GM12878 (cell line): ENCODE measurements at regions of chr11 and their contacts with region 1.

Region 1: DNA sequence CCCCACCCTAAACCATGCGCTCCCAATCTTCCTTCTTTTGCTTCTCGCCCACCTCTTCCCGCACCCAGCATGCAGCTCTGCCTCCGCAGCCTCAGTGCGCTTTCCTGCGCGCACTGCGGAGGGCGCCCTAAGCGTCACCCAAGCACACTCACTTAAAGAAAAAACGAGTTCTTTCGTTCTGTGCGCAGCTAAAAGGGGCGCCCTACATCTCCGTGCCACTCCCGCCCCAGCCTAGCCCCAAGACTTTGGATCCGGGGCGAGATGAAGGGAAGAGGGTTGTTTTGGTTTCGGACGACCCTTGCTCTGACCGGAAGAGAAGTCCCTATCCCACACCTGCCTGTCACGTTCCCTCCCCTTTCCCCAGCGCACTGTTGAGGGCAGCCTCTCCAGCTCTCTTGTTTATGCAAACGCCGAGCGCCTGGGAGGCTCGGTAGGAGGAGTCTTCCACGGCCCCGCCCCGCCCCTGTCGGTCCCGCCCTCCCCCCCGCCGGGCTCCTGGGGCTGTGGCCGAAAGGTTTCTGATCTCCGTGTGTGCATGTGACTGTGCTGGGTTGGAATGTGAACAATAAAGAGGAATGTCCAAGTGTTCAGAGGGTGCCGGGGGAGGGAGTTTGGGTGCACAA is 5.3 kb downstream of the VSIG2 start:
- DNase-seq: peak; percentile 53
- ATAC-seq: peak; percentile 94
- H3K4me3 ChIP-seq: peak overlapping the region; percentile 88
- H3K27ac ChIP-seq: peak overlapping the region; percentile 53; the same call in 1 of the 2 replicates
- H3K4me1 ChIP-seq: peaks cover 4% of the 10 kb centered on the region; the same call in 1 of the 2 replicates
- H3K27me3 ChIP-seq: no peaks in the 10 kb centered on the region
- CTCF ChIP-seq: peak; percentile 66 to 79 (median 78)
- EP300 ChIP-seq: no peak
- POLR2A ChIP-seq: peak; percentile 70
- RAD21 ChIP-seq: peak; percentile 47

Region 2: DNA sequence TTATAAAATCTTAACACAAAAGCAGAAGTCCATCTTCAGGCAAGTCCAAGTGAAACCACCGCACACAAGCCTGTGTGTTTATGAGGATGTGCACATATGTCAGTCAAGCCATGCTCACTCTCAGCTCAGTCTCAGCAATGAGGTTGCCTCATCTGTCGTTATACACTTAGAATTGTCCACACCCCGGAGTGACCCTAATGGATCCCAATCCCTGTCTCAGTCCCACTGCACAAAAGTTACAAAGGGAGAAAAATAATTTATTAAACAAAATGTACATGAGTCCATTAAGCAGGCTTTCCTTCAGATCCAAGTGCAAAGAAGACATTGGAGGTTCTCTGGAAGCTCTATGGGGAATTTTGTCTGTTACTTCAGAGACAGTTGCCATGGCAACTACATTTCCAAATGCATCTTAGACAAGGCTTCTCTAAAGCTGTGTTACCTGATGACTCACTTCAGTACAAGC is 227.7 kb before region 1 on chr11:
- CTCF ChIA-PET with region 1: no interaction called
- POLR2A ChIA-PET with region 1: no interaction called
- RAD21 ChIA-PET with region 1: no interaction called
- SMC1A ChIA-PET with region 1: no interaction called
- in situ Hi-C with region 1: no loop called
- intact Hi-C with region 1: no loop called
- DNase-seq: no peak
- ATAC-seq: no peak
- H3K4me3 ChIP-seq: no peak overlapping the region
- H3K27ac ChIP-seq: no peak overlapping the region
- H3K4me1 ChIP-seq: no peaks in the 10 kb centered on the region
- H3K27me3 ChIP-seq: peaks cover 0 to 6% of the 10 kb centered on the region in 2 experiments; a peak in 1 of 4 replicates
- CTCF ChIP-seq: no peak
- EP300 ChIP-seq: no peak
- POLR2A ChIP-seq: no peak
- RAD21 ChIP-seq: no peak

Region 3: GRCh38 chr11:124724979-124725718 is 21.6 kb before region 1 on chr11:
- CTCF ChIA-PET with region 1: interaction called, 36 read pairs
- POLR2A ChIA-PET with region 1: interaction called, 5 read pairs
- RAD21 ChIA-PET with region 1: interaction called, 7 read pairs
- SMC1A ChIA-PET with region 1: interaction called, 8 read pairs
- in situ Hi-C with region 1: no loop called
- intact Hi-C with region 1: no loop called
- DNase-seq: peak; percentile 41
- ATAC-seq: peak; percentile 95
- H3K4me3 ChIP-seq: no peak overlapping the region
- H3K27ac ChIP-seq: no peak overlapping the region
- H3K4me1 ChIP-seq: peaks cover 7% of the 10 kb centered on the region
- H3K27me3 ChIP-seq: no peaks in the 10 kb centered on the region; a peak in 2 of 4 replicates
- CTCF ChIP-seq: no peak
- EP300 ChIP-seq: no peak
- POLR2A ChIP-seq: no peak
- RAD21 ChIP-seq: no peak

Region 4: GRCh38 chr11:124732230-124732629 is 14.5 kb before region 1 on chr11:
- CTCF ChIA-PET with region 1: interaction called, 13 read pairs
- POLR2A ChIA-PET with region 1: no interaction called
- RAD21 ChIA-PET with region 1: no interaction called
- SMC1A ChIA-PET with region 1: interaction called, 3 read pairs
- in situ Hi-C with region 1: no loop called
- intact Hi-C with region 1: no loop called
- DNase-seq: no peak
- ATAC-seq: no peak
- H3K4me3 ChIP-seq: no peak overlapping the region
- H3K27ac ChIP-seq: no peak overlapping the region
- H3K4me1 ChIP-seq: no peaks in the 10 kb centered on the region
- H3K27me3 ChIP-seq: peaks cover 0 to 3% of the 10 kb centered on the region in 2 experiments; a peak in 1 of 4 replicates
- CTCF ChIP-seq: no peak
- EP300 ChIP-seq: no peak
- POLR2A ChIP-seq: no peak
- RAD21 ChIP-seq: no peak

Region 5: GRCh38 chr11:125001079-125001778 is 254.5 kb after region 1 on chr11:
- CTCF ChIA-PET with region 1: no interaction called
- POLR2A ChIA-PET with region 1: no interaction called
- RAD21 ChIA-PET with region 1: no interaction called
- SMC1A ChIA-PET with region 1: no interaction called
- in situ Hi-C with region 1: no loop called
- intact Hi-C with region 1: no loop called
- DNase-seq: peak; percentile 5
- ATAC-seq: no peak; the same call in 2 of the 3 replicates
- H3K4me3 ChIP-seq: no peak overlapping the region
- H3K27ac ChIP-seq: no peak overlapping the region
- H3K4me1 ChIP-seq: no peaks in the 10 kb centered on the region
- H3K27me3 ChIP-seq: no peaks in the 10 kb centered on the region
- CTCF ChIP-seq: no peak
- EP300 ChIP-seq: no peak
- POLR2A ChIP-seq: no peak
- RAD21 ChIP-seq: no peak

Region 6: DNA sequence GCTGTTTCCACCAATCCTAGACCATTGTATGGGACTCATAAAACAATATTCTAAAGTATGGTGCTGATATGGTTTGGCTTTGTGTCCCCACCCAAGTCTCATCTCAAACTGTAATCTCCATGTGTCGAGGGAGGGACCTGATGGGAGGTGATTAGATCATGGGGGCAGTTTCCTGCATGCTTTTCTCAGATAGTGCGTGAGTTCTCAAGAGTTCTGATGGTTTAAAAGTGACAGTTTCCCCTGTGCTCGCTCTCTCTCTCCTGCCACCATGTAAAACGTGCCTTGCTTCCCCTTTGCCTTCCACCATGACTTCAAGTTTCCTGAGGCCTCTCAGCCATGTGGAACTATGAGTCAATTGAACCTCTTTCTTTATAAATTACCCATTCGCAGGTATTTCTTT is 778.6 kb after region 1 on chr11:
- CTCF ChIA-PET with region 1: no interaction called
- POLR2A ChIA-PET with region 1: no interaction called
- RAD21 ChIA-PET with region 1: no interaction called
- SMC1A ChIA-PET with region 1: no interaction called
- in situ Hi-C with region 1: no loop called
- intact Hi-C with region 1: no loop called
- DNase-seq: no peak
- ATAC-seq: no peak
- H3K4me3 ChIP-seq: no peak overlapping the region
- H3K27ac ChIP-seq: no peak overlapping the region
- H3K4me1 ChIP-seq: no peaks in the 10 kb centered on the region
- H3K27me3 ChIP-seq: no peaks in the 10 kb centered on the region
- CTCF ChIP-seq: no peak
- EP300 ChIP-seq: no peak
- POLR2A ChIP-seq: no peak
- RAD21 ChIP-seq: no peak